Activated CD8-positive, alpha-beta T cell treated with anti-CD3 and anti-CD28 coated beads, Interleukin-2, amount 10 ng/mL, durations not matched to agents 7 days and 5 days (primary cell): ENCODE measurements at regions of chr11 and their contacts with region 1.

Region 1: GRCh38 chr11:82900277-82901164 is at the start of gene PRCP:
- DNase-seq: peak; percentile 96
- ATAC-seq: peak; percentile 83
- H3K4me3 Mint-ChIP-seq: peak within 1 kb of the TSS; percentile 97
- H3K27ac Mint-ChIP-seq: peak within 1 kb of the TSS; percentile 99
- H3K4me1 Mint-ChIP-seq: peaks cover 48% of the 10 kb centered on the region
- H3K27me3 Mint-ChIP-seq: no peaks in the 10 kb centered on the region
- total RNA-seq, gene PRCP: 17.2 to 18.2 TPM

Region 2: DNA sequence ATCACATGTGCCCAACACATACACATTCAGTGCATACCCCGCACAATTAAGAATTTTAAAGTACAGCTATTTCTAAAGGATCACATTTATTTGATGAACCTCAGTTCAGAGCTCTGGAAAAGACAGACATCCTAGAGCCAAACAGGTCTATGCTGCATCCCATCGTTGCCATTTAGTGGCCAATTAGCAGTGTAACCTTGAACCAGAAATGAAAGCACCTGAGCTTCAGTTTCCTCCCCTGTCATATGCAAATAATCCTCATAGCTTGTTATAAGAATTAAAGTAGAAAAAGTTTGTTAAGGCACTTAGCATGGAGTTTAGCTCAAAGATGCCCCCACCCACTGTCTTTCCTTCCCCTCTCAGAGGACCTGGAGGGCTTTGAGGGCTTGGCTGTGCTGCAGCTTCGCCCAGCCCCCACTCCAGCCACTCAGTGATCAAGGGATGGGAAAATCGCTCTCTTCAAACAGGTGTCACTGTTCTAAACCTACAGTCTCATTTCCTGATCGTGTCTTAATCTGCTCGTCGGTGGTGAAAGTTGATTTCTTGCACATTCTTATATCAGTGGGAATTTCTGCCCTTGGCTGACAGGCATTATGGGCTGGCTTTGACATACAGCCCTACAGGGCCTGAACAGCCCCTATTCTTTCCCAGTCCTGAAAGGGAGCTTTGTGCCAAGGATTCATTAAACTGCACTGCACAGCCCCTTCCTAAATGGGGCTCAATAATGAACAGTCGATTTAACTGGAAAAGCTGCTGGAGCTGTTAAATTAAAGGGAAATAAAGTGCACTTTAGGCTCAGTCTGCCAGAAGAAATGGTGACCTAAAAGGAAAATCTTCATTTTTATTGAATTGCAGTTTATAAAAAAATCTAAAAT is 143.5 kb before region 1 on chr11:
- CTCF ChIA-PET with region 1: no interaction called
- POLR2A ChIA-PET with region 1: no interaction called
- DNase-seq: no peak
- ATAC-seq: peak; percentile 11
- H3K4me3 Mint-ChIP-seq: no peak overlapping the region
- H3K27ac Mint-ChIP-seq: no peak overlapping the region
- H3K4me1 Mint-ChIP-seq: peaks cover 13% of the 10 kb centered on the region
- H3K27me3 Mint-ChIP-seq: peaks cover 13% of the 10 kb centered on the region

Region 3: DNA sequence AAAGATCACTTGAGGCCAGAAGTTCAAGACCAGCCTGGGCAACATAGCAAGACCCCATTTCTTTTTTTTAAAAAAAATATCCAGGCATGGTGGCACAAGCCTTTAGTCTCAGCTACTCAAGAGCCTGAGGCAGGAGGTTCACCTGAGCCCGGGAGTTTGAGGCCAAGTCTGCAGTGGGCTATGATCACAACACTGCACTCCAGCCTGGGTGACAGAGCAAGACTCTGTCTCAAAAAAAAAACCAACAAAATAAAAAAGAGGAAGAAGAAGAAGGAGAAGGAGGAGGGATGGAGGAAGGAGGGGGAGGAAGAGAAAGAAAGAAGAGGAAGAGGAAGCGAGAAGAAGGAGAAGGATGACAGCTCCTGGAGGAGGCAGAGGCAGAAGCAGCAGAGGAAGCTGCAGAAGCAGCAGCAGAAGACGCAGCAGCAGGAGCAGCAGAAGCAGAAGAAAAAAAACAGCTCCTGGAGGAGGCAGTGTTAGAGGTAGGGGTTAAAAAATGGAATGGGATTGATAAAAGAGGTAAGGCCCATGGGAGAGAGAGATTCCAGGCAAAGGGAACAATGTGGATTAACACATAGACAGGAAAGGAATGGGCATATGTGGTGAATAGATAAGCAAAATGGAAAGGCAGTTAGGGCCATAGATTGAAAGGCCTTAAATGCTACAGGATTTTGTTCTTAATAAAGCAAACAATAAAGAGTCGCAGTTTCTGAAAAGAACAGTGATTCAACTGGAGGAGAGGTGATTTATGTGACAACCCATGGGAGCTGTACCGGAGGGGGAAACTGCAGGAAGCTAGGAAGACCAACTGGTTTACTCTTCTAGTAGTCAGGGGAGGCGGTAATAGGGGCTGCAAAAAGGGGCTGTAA is 11.2 kb before region 1 on chr11:
- CTCF ChIA-PET with region 1: interaction called, 15 read pairs
- POLR2A ChIA-PET with region 1: interaction called, 3 read pairs
- DNase-seq: no peak
- ATAC-seq: no peak
- H3K4me3 Mint-ChIP-seq: no peak overlapping the region
- H3K27ac Mint-ChIP-seq: no peak overlapping the region
- H3K4me1 Mint-ChIP-seq: no peaks in the 10 kb centered on the region
- H3K27me3 Mint-ChIP-seq: no peaks in the 10 kb centered on the region

Region 4: DNA sequence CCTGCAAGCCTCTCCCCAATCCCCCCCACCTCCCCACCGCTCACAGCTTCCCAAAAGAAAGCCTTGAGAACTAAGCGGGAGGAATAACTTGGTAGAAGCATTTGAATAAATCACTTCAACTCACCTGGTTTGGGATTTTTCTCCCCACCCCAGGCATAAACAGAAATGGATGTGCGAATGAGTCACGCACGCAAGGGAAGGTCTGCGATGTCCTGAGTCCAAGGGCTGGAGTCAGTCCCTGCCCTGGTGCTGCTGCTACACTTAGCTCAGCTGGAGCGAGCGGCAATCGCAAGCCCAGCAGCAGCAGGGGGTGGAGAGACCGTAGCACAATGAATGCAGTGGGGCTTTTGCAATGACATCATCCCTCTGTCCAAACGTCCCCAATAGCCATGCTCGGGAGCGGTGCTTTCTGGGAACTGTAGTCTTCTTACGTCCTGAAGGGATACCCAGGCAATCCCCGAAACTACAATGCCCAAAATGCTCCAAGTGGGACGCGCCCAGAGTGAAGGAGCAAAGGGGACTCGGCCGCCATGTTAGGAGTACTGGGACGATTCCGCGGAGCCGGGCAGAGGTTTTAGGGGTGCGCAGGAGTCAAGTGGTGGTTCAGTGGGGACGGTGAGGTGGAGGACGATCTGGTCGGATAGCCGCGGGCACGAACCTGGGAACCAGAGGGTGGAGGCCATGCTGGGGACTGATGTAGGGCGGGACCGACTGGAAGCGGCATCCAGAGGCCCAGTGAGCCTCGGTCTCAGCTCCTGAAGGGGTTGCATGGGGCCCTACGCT is 171.2 kb after region 1 on chr11 and contains the start of gene RAB30:
- CTCF ChIA-PET with region 1: interaction called, 7 read pairs
- POLR2A ChIA-PET with region 1: interaction called, 10 read pairs
- DNase-seq: peak; percentile 98
- ATAC-seq: peak; percentile 98
- H3K4me3 Mint-ChIP-seq: no peak within 1 kb of the TSS
- H3K27ac Mint-ChIP-seq: no peak within 1 kb of the TSS
- H3K4me1 Mint-ChIP-seq: peaks cover 28% of the 10 kb centered on the region
- H3K27me3 Mint-ChIP-seq: no peaks in the 10 kb centered on the region
- total RNA-seq, gene RAB30: 8.8 to 13.3 TPM

Region 5: DNA sequence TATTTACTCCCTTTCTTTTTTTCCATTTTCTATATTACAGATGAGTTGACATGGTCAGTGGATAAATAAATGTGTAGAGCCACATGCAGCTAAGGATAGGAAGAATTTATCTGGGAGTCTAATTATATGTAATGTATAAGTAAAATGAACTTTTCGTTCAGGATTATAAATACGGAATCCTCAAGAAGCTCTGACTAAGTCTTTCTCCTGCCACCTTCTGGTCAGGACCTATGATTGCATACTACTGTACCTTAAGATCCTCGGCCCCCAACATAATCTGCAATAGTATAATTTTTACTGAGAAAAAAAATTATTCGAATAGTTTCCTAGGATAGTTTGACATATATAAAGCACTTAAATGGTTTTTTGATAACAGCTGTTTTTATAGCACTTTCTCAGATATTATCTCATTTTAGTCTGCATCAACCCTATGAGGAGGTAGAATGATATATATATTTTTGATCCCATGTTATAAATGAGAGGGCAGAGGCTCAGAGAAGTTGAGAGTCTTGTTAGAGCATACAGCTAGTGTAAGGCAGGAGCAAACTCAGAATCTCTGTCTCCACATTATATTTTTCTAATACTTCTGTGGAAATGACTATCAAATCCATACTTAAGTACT is 349.6 kb after region 1 on chr11:
- CTCF ChIA-PET with region 1: interaction called, 11 read pairs
- POLR2A ChIA-PET with region 1: interaction called, 5 read pairs
- DNase-seq: peak; percentile 33
- ATAC-seq: no peak
- H3K4me3 Mint-ChIP-seq: no peak overlapping the region
- H3K27ac Mint-ChIP-seq: no peak overlapping the region
- H3K4me1 Mint-ChIP-seq: peaks cover 7% of the 10 kb centered on the region
- H3K27me3 Mint-ChIP-seq: no peaks in the 10 kb centered on the region

Region 6: DNA sequence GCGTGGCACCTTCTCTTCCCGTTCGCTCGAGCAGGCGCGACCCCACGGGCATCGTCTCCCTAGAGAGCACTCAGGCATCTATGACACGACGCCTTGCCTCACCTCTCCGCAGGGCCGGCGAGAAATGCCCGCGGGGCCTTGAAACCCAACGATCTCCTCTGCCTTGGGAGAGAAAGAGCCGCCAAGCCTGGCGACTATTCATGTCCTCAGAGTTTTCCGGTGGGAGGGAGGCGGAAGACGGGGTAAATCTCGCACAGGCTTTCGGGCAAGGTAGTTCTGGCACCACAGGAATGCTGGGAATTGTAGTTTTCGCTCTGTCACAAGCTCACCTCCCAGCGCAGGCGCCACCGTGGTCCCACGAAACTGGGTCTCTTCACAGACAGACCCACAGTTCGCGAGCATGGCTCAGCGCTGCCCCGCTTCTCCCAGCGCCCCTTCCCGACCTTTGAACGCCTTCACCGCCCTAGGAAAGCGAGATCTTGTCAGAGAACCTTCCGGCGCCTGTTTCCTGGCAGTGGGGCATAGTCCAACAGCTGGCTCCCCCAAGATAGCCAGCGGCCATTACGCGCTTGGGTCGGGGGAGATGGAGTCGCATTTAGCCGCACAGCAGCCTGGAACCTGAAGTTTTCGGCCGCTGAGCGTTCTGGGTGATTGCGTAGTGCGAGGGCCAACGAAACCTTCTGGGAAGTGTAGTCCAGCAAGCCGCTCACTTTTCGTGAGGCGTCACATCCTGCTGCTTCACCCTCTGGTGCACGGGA is 385.4 kb after region 1 on chr11 and contains the start of gene CCDC90B:
- CTCF ChIA-PET with region 1: interaction called, 6 read pairs
- POLR2A ChIA-PET with region 1: interaction called, 28 read pairs
- DNase-seq: peak; percentile 97
- ATAC-seq: peak; percentile 94
- H3K4me3 Mint-ChIP-seq: peak within 1 kb of the TSS; percentile 95
- H3K27ac Mint-ChIP-seq: peak within 1 kb of the TSS; percentile 99
- H3K4me1 Mint-ChIP-seq: peaks cover 30% of the 10 kb centered on the region
- H3K27me3 Mint-ChIP-seq: peaks cover under 1% of the 10 kb centered on the region
- total RNA-seq, gene CCDC90B: 30.2 to 31.3 TPM